ENCODE measurements at regions of chr4 and their contacts with region 1.

Region 1: GRCh38 chr4:29948451-29948850 is 771.7 kb upstream of the PCDH7 start:
- DNase-seq: no peak
- H3K4me3 ChIP-seq: no peak overlapping the region
- H3K4me3 Mint-ChIP-seq: no peak overlapping the region
- H3K27ac ChIP-seq: no peak overlapping the region
- H3K27ac Mint-ChIP-seq: no peak overlapping the region
- H3K4me1 ChIP-seq: no peaks in the 10 kb centered on the region
- H3K4me1 Mint-ChIP-seq: no peaks in the 10 kb centered on the region
- H3K27me3 ChIP-seq: no peaks in the 10 kb centered on the region
- H3K27me3 Mint-ChIP-seq: no peaks in the 10 kb centered on the region

Region 2: DNA sequence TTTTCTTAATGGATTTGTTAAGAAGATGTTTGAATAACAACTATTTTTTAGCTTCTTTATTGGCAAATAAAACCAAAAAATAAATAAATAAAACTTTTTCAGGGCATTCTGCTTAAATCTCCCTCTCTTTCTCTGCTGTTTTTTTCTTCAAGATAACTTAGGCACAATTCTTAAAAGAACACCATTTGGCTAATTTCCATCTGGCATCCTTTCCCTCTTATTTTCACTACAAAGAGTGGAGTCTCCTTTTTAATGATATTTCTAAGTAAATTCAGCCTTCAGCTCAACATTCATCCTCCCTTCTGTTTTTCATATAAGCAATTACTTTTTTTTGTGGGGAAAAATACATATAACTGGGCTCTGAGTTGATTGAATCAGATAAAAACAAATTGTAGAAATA is 859.8 kb after region 1 on chr4:
- CTCF ChIA-PET with region 1: no interaction called
- POLR2A ChIA-PET with region 1: interaction called, 13 read pairs
- DNase-seq: no peak
- H3K4me3 ChIP-seq: no peak overlapping the region
- H3K4me3 Mint-ChIP-seq: no peak overlapping the region
- H3K27ac ChIP-seq: no peak overlapping the region
- H3K27ac Mint-ChIP-seq: no peak overlapping the region
- H3K4me1 ChIP-seq: no peaks in the 10 kb centered on the region
- H3K4me1 Mint-ChIP-seq: no peaks in the 10 kb centered on the region
- H3K27me3 ChIP-seq: no peaks in the 10 kb centered on the region
- H3K27me3 Mint-ChIP-seq: no peaks in the 10 kb centered on the region